ENCODE measurements at regions of chr7 and their contacts with region 1.

Region 1: DNA sequence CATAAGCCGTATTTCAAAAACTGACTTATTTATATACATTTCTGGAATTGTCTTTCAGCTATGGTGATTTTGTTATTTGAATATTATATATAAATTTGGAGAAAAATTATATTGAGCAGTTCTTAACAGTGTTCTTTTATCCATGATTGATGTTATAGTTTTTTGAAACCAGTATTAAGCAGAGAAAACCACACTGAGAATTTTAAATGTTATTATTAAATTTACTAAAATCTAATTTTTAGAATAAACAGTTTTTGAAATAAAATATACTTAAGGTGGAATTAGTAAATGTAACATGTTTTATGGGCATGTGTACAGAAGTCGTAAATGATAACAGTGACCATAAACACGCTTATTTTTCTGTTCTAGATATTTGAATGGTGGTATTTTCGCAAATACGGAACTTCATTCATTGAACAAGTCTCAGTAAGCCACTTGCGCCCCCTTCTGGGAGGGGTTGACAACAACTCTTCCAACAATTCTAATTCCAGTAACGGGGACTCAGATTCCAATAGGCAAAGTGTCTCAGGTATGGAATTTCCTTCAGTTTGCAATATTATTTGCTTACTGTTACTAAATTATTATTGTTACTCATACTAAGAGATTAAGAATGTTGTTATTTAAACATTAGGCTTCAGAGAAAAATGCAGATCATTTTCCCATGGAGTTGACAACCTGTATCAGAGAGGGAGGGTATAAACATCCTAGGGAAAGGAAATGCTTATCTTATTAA is 166.1 kb downstream of the ST7 start:
- DNase-seq: peak; percentile 18
- CTCF ChIP-seq: peak; percentile 73

Region 2: GRCh38 chr7:117076426-117076943 is 42.9 kb before region 1 on chr7:
- CTCF ChIA-PET with region 1: no interaction called
- POLR2A ChIA-PET with region 1: no interaction called
- DNase-seq: no peak
- CTCF ChIP-seq: no peak

Region 3: GRCh38 chr7:117134889-117135552 is 15.7 kb after region 1 on chr7:
- CTCF ChIA-PET with region 1: interaction called, 25 read pairs
- POLR2A ChIA-PET with region 1: no interaction called
- DNase-seq: no peak
- CTCF ChIP-seq: no peak

Measured in GM10248 (cell line).